ENCODE measurements at regions of chr2 and their contacts with region 1.

Region 1: DNA sequence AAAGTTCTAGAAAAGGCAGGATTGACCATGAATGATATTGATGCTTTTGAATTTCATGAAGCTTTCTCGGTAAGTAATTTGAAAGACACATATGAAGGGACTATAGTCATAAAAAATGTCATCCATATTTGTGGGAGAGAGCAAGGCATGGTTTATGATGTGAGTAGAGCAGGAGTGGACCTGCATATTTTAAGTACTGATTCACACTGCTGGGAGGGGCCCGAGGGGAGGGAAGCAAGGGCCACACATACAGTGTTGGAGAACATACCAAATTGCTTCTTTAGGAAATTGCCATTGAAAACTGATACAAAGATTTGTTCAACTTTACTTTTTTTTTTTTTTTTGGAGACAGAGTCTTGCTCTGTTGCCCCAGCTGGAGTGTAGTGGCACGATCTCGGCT is 39.4 kb downstream of the HADHB start:
- DNase-seq: no peak
- ATAC-seq: peak in 1 of 2 donors; percentile 35

Region 2: GRCh38 chr2:26230806-26231205 is 53.3 kb before region 1 on chr2:
- intact Hi-C with region 1: loop called in 1 of 2 experiments (anchors 5 kb)
- DNase-seq: no peak
- ATAC-seq: no peak

Region 3: GRCh38 chr2:26238311-26238958 is 45.7 kb before region 1 on chr2:
- intact Hi-C with region 1: loop called (anchors 2 to 5 kb)
- DNase-seq: no peak
- ATAC-seq: peak in 1 of 2 donors; percentile 31

Measured in left cardiac atrium (tissue), 4 donors.